ENCODE measurements at regions of chr12 and their contacts with region 1.

Region 1: GRCh38 chr12:40921563-40922163 is 229.4 kb downstream of the CNTN1 start:
- DNase-seq: no peak
- ATAC-seq: no peak
- H3K4me3 ChIP-seq: no peak overlapping the region
- H3K27ac ChIP-seq: no peak overlapping the region
- H3K4me1 ChIP-seq: no peaks in the 10 kb centered on the region
- H3K27me3 ChIP-seq: no peaks in the 10 kb centered on the region
- CTCF ChIP-seq: peak; percentile 35 to 74 (median 58)
- POLR2A ChIP-seq: no peak

Region 2: DNA sequence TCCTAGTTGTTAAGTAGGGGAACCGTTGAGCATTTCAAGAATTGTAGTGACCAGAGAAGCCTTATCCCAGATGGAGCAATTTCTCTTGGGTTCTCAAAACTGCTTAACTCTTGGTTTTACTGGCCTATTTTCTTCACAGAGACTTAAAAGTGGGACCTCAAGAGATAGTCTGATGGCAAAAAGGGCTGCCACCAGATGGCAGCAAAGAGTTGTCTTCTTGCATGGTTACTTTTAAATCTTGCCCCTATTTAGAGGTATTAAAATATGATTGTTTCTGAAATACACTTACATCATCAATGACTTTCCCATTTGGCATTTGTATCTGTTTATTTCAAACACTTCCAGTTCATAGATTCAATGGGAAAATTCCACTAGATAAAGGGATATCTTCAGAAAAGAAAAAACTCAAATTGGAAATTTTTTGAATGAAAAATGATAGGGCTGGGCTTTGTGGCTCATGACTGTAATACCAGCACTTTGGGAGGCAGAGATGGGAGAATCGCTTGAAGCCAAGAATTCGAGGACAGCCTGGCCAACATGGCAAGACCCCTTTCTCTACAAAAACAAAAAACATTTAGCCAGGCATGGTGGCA is 299.3 kb before region 1 on chr12:
- intact Hi-C with region 1: loop called (anchors 5 kb)
- DNase-seq: peak; percentile 57 to 77 (median 62)
- ATAC-seq: no peak
- H3K4me3 ChIP-seq: no peak overlapping the region
- H3K27ac ChIP-seq: no peak overlapping the region
- H3K4me1 ChIP-seq: no peaks in the 10 kb centered on the region
- H3K27me3 ChIP-seq: no peaks in the 10 kb centered on the region
- CTCF ChIP-seq: peak; percentile 14 to 73 (median 61)
- POLR2A ChIP-seq: no peak

Region 3: DNA sequence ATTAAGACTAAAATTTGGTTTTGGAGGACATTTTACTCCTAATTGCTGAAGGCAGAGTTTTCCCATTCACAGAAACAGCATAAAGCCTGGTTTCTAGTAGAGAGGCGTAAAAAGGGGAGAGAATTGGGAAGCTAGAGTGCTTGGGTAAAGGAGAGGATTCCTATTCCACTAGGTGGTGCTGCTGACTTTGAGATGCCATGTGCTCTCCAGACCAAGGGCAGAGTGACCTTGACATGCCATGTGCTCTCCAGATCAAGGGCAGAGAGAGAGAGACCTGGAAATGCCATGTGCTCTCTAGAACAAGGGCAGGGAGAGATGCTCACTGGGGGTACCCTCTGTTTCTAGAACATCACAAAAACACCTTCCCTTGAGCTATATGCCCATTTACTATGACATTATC is 90.3 kb after region 1 on chr12:
- intact Hi-C with region 1: no loop called
- DNase-seq: no peak
- ATAC-seq: no peak
- H3K4me3 ChIP-seq: no peak overlapping the region
- H3K27ac ChIP-seq: no peak overlapping the region
- H3K4me1 ChIP-seq: no peaks in the 10 kb centered on the region
- H3K27me3 ChIP-seq: no peaks in the 10 kb centered on the region
- CTCF ChIP-seq: no peak
- POLR2A ChIP-seq: no peak

Measured in body of pancreas (tissue), 4 donors.